Left cardiac atrium (tissue), 4 donors: ENCODE measurements at regions of chr3 and their contacts with region 1.

Region 1: GRCh38 chr3:107235928-107236315 is 141.3 kb upstream of the CCDC54 start:
- DNase-seq: no peak
- ATAC-seq: peak; percentile 71 to 75

Region 2: DNA sequence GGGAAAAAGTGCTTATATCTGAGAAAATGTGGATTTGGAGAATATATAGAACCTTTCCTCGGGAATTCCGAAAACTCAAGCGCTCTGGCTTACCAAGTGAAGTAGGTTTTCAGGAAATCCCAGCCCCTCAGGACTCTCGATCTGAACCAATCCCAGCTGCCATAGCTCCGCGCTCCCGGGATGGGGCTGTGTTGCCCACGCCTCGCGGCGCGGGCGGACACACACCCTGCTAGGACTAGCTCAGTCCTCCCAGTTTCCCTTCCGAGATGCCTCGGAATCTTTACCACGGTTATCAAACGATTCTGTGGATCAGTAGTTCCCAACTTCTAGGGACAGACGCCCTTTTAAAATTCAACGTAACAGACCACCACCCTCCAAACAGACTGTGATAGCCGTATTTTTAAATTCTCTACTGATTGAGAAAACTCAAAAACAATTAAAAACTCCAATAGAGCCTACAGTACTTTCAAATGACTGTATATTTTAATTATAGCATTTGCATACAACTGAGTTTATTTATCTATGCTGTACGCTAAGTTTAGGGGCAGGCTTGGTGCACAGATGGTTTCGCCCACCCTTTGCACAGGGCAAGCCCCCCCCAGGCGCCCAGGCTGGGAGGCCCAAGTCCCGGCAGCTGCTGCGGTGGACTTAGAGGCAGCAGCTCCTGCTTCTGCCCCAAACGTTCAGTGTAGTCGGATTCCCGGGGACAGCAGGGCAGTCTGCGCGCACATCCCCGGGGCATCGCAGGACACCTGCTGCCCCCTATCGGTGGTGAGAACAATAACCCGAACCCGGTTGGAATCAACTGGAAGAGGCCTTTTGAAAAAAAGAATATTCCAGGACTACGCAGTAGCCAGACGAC is 193.6 kb after region 1 on chr3:
- intact Hi-C with region 1: loop called in 1 of 2 experiments (anchors 10 kb)
- DNase-seq: peak; percentile 79
- ATAC-seq: peak; percentile 82 to 88

Region 3: GRCh38 chr3:107522510-107523288 is 286.8 kb after region 1 on chr3 and contains the start of gene BBX:
- intact Hi-C with region 1: loop called in 1 of 2 experiments (anchors 10 kb)
- DNase-seq: peak; percentile 89
- ATAC-seq: peak; percentile 95 to 97
- total RNA-seq, gene BBX: 38.4 to 42.1 TPM

Region 4: DNA sequence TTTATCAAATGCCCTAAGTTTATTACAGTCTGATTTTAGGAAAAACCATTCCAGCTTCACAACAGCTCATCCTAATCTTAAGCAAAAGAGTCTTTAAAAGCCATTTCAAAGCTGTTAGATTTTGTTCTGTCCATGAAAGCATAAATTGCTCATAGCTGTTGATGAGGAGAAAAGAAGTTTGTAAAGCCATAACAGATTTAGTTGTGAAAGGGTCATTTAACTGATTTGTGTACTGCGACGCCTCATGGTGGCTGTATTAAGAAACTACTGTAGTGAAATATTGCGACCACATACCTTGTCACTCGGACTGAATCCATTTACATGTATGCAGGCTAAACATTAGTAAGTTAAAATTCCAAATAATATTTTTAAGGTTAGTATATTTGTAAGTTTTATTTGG is 307.7 kb after region 1 on chr3:
- intact Hi-C with region 1: loop called in 1 of 2 experiments (anchors 10 kb)
- DNase-seq: no peak
- ATAC-seq: no peak

Region 5: DNA sequence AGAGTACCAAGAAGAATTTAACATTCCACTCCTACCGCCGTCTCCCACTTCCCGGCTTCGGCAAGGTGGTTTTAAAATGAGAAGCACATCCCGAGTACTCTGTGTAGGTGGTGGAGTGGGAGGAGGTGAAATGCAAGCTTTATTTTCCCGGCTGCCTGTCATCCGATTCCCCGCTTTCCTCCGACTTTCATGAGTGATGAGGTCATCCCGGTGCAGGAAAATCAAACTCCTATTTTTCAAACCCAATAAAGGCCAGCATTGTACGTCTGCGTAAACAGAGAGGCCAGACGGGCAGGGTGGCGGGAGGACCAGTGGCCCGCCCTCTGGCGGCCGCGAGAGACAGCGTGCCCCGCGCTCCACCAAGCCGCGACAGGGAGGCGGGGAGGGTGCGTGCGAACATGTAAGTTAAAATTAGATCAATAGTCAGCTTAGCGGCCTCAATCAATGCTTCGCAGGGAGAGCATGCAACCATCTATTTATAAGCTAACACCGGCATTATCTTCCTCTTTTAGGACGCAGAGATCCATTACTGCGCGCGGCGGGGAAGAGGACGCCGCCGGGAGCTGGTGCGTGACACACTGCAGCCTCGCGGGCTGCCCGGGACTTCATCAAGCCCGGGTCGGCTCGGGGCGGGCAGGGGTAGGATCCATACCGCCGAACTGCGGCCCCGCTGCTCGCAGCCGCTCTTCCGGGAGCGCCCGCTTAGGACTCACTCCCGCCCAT is 691.6 kb after region 1 on chr3:
- intact Hi-C with region 1: loop called in 1 of 2 experiments (anchors 10 kb)
- DNase-seq: peak; percentile 76
- ATAC-seq: peak; percentile 98

Region 6: GRCh38 chr3:108489771-108490170 is 1253.8 kb after region 1 on chr3:
- intact Hi-C with region 1: loop called in 1 of 2 experiments (anchors 10 kb)
- DNase-seq: no peak
- ATAC-seq: peak; percentile 44 to 50